Heart left ventricle (tissue), 16 donors: ENCODE measurements at regions of chr5 and their contacts with region 1.

Region 1: GRCh38 chr5:151651997-151652645 is 34.6 kb downstream of the SPARC start:
- DNase-seq: peak; percentile 74 to 86 (median 82)
- ATAC-seq: peak; percentile 79 to 98 (median 94)
- H3K4me3 ChIP-seq: no peak overlapping the region
- H3K27ac ChIP-seq: no peak overlapping the region
- H3K4me1 ChIP-seq: no peaks in the 10 kb centered on the region
- H3K27me3 ChIP-seq: no peaks in the 10 kb centered on the region
- CTCF ChIP-seq: peak; percentile 77 to 89 (median 86)
- POLR2A ChIP-seq: no peak

Region 2: DNA sequence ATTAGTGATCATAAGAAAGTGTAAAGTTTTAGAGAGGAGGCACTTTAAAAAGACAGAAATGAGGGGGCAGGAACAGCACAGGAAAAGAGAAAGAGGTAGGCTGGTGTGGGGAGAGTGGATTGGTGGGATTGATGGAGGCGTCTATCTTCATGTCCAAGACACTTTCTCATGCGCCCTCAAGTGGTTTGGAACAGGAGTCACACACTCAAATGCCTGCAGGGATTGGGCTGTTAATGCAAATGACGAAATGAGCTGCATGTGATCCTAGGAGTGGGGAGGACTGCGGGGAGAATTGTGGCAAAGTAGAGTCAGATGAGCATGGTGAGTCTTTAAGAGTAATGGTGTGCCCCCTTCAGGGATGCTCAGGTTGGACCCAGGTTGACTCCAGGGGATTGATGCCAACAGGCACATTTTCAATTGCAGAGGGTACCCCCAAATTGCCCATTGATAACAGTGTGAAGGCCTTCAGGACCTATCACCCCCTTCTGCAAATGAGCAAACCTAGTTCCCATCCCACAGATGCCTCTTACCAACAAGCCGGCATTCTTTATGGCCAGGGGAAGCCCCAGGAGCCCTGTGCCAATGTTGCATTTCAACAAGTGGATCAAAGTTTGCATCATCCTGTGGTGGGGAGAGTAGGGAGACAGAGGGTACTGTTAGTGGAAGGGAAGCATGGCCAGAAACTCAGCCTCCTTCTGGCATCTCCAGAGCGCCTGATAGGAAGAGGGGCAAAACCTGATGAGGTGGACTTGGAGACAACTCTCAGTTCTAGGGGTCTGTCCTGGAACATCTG is 353.9 kb before region 1 on chr5:
- intact Hi-C with region 1: no loop called
- DNase-seq: peak in 1 of 5 donors; percentile 27
- ATAC-seq: peak in 2 of 4 donors; percentile 59 to 65
- H3K4me3 ChIP-seq: no peak overlapping the region
- H3K27ac ChIP-seq: no peak overlapping the region
- H3K4me1 ChIP-seq: peaks cover 0 to 3% (median 0%) of the 10 kb centered on the region in 12 donors
- H3K27me3 ChIP-seq: peaks cover 0 to 14% (median 0%) of the 10 kb centered on the region in 9 donors
- CTCF ChIP-seq: peak in 8 of 12 donors; percentile 9 to 48 (median 40)
- POLR2A ChIP-seq: no peak

Region 3: GRCh38 chr5:151447174-151448037 is 204.7 kb before region 1 on chr5 and contains the start of gene SLC36A1:
- intact Hi-C with region 1: loop called (anchors 1 to 5 kb)
- DNase-seq: peak; percentile 93 to 97 (median 94)
- ATAC-seq: peak; percentile 88 to 98 (median 96)
- H3K4me3 ChIP-seq: peak within 1 kb of the TSS; percentile 32 to 86 (median 76)
- H3K27ac ChIP-seq: peak within 1 kb of the TSS in 8 of 12 donors; percentile 15 to 74 (median 58)
- H3K4me1 ChIP-seq: peaks cover 0 to 24% (median 3%) of the 10 kb centered on the region in 12 donors
- H3K27me3 ChIP-seq: peaks cover 0 to 6% (median 0%) of the 10 kb centered on the region in 9 donors
- CTCF ChIP-seq: peak; percentile 94 to 99 (median 97)
- POLR2A ChIP-seq: peak in 1 of 2 donors; percentile 57
- total RNA-seq, gene SLC36A1: 1.7 to 18.8 (median 2.8) TPM

Region 4: DNA sequence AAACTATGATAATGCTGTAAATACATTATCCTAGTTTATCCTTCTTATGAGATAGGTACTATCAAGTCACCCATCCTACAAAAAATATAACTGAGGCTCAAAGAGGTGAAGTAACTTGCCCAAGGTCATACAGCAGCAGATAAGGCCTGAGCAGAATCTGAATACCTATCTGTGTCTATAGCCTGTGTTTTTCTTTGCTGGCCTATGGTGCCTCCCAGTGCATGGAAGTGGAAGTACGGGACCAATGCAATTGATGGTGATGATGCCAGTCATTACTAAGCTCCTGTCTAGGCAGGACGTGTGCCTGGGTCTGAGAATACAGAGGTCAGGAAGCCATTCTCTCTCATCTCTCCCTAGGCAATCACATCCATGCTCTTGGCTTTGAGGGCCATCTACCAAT is 128.8 kb before region 1 on chr5:
- intact Hi-C with region 1: loop called (anchors 1 to 5 kb)
- DNase-seq: no peak
- ATAC-seq: peak in 1 of 4 donors; percentile 53
- H3K4me3 ChIP-seq: no peak overlapping the region
- H3K27ac ChIP-seq: no peak overlapping the region
- H3K4me1 ChIP-seq: no peaks in the 10 kb centered on the region
- H3K27me3 ChIP-seq: no peaks in the 10 kb centered on the region
- CTCF ChIP-seq: peak in 8 of 12 donors; percentile 13 to 39 (median 28)
- POLR2A ChIP-seq: no peak